GM12878 (cell line): ENCODE measurements at regions of chr18 and their contacts with region 1.

Region 1: DNA sequence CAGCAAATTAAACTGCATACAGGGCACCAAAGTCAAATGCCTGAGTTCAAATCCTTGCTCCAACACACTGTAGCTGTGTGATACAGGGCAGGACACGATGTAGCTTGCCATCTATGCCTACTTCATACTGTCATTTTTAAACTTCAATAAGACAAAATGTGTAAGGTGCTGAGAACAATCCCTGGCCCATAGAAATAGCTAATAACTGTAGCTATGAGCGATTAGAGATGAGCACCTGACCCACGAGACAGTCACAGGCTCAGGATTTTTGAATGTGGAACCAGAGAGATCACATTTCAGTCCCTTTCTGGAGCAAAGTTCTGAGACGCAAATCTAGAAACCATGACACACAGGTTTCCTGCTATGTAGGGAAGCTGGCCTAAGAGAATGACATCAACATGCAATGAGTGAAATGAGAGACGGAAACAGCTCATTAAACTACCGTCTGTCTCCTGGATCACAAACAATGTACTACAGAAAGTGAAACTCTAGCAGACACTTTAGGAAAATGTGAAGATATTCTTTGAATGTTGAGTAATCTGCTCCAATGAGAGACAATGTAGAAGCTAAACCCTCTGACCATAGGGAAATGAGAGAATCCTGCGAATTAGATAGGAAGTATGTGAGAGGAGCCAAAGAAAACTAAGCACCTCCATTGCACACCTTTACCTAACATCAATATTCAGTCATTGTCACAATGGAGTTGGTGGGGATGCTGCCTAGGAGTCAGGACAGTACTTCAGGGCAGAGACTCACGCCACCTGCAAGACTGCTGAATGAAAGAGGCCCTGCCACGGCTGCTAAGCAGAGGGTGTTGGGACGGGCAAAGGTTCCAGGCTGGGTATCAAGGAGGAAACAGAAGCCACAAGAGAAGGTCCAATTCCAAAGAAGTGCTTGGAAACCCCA is 25.5 kb downstream of the B4GALT6 start:
- DNase-seq: peak; percentile 89
- ATAC-seq: peak; percentile 81
- H3K4me3 ChIP-seq: peak overlapping the region; percentile 56
- H3K27ac ChIP-seq: peak overlapping the region; percentile 98
- H3K4me1 ChIP-seq: peaks cover 37% of the 10 kb centered on the region
- H3K27me3 ChIP-seq: no peaks in the 10 kb centered on the region
- CTCF ChIP-seq: no peak
- EP300 ChIP-seq: peak in 1 of 2 experiments; percentile 78; a peak in 2 of 4 replicates
- POLR2A ChIP-seq: no peak; the same call in 1 of the 2 replicates
- RAD21 ChIP-seq: no peak

Region 2: GRCh38 chr18:31497837-31498573 is 160.9 kb before region 1 on chr18 and contains the start of gene DSG2:
- CTCF ChIA-PET with region 1: no interaction called
- POLR2A ChIA-PET with region 1: interaction called, 3 read pairs
- RAD21 ChIA-PET with region 1: interaction called, 8 read pairs
- SMC1A ChIA-PET with region 1: interaction called, 7 read pairs
- in situ Hi-C with region 1: no loop called
- intact Hi-C with region 1: loop called (anchors 5 kb)
- DNase-seq: no peak
- ATAC-seq: peak; percentile 82
- H3K4me3 ChIP-seq: peak within 1 kb of the TSS; percentile 88
- H3K27ac ChIP-seq: peak within 1 kb of the TSS; percentile 79
- H3K4me1 ChIP-seq: peaks cover 6% of the 10 kb centered on the region
- H3K27me3 ChIP-seq: no peaks in the 10 kb centered on the region
- CTCF ChIP-seq: no peak
- EP300 ChIP-seq: no peak
- POLR2A ChIP-seq: peak; percentile 89
- RAD21 ChIP-seq: no peak
- polyA plus RNA-seq, gene DSG2: 11.7 to 12.7 TPM

Region 3: DNA sequence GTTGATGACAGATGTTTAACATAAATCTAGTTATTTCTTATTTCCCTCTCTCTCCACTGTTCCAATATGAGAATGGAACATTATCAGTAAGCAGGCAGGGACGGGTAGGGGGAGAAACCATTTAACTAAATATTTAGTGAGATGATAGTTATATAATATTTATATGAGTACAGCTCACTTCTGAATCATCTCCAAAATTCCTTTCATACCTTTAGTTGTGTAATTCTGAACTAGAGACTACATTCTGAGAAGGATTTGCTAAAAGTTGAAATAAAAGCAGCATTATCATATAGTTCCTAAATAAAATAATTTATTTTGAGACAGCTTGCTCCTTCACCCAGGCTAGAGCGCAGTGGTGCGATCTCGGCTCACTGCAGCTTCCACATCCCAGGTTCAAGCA is 15.9 kb before region 1 on chr18:
- CTCF ChIA-PET with region 1: interaction called, 38 read pairs
- POLR2A ChIA-PET with region 1: interaction called, 60 read pairs
- RAD21 ChIA-PET with region 1: interaction called, 102 read pairs
- SMC1A ChIA-PET with region 1: interaction called, 97 read pairs
- in situ Hi-C with region 1: no loop called
- intact Hi-C with region 1: no loop called
- DNase-seq: no peak
- ATAC-seq: no peak
- H3K4me3 ChIP-seq: no peak overlapping the region
- H3K27ac ChIP-seq: no peak overlapping the region
- H3K4me1 ChIP-seq: peaks cover 32% of the 10 kb centered on the region
- H3K27me3 ChIP-seq: no peaks in the 10 kb centered on the region
- CTCF ChIP-seq: no peak
- EP300 ChIP-seq: no peak
- POLR2A ChIP-seq: no peak
- RAD21 ChIP-seq: no peak

Region 4: DNA sequence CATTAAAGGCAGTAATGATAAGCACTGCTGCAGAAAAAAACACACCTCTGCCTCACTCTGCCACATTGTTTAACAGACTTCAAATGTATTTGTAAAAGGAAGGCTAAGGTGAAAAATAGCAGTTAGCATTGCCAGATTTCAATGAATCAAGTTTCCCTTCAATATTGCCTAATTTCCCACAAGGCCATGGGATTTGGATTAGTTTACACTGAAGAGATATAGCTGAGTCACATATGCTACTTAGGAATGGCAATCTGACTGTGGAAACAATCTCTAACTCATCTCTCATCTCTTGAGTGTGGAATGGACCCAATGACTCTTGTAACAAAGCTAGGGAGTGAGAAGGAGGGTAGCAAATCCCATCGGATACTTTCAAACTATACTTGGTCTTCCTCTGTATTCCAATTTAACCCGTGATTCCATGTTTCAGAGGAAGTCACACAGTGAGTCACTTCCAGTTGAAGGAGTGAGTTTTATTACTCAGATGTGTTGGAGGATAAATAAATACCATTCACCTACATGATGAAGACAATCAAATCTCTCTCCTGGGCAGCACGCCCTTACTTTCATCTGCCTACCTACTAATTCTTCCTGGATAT is 20.3 kb after region 1 on chr18:
- CTCF ChIA-PET with region 1: interaction called, 135 read pairs
- POLR2A ChIA-PET with region 1: interaction called, 64 read pairs
- RAD21 ChIA-PET with region 1: interaction called, 168 read pairs
- SMC1A ChIA-PET with region 1: interaction called, 169 read pairs
- in situ Hi-C with region 1: no loop called
- intact Hi-C with region 1: loop called (anchors 1 kb)
- DNase-seq: no peak
- ATAC-seq: no peak
- H3K4me3 ChIP-seq: peak overlapping the region; percentile 100
- H3K27ac ChIP-seq: peak overlapping the region; percentile 49; the same call in 1 of the 2 replicates
- H3K4me1 ChIP-seq: peaks cover 23% of the 10 kb centered on the region
- H3K27me3 ChIP-seq: no peaks in the 10 kb centered on the region
- CTCF ChIP-seq: no peak
- EP300 ChIP-seq: no peak
- POLR2A ChIP-seq: no peak
- RAD21 ChIP-seq: no peak

Region 5: DNA sequence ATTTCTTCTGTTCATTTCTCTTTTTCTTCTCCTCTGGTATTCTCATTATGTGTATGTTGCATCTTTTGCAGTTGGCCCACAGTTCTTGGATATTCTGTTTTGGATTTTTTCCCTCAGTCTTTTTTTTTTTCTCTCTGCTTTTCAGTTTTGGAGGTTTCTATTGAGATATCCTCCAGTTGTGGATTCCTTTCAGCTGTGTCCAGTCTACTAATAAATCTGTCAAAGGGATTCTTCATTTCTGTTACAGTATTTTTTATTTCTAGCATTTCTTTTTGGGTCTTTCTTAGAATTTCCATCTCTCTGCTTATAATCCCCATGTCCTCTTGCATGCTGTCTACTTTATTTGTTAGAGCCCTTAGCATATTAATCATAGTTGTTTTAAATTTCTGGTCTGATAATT is 524.6 kb after region 1 on chr18:
- CTCF ChIA-PET with region 1: no interaction called
- POLR2A ChIA-PET with region 1: no interaction called
- RAD21 ChIA-PET with region 1: no interaction called
- SMC1A ChIA-PET with region 1: no interaction called
- in situ Hi-C with region 1: no loop called
- intact Hi-C with region 1: no loop called
- DNase-seq: no peak
- ATAC-seq: no peak
- H3K4me3 ChIP-seq: no peak overlapping the region
- H3K27ac ChIP-seq: no peak overlapping the region
- H3K4me1 ChIP-seq: no peaks in the 10 kb centered on the region
- H3K27me3 ChIP-seq: no peaks in the 10 kb centered on the region
- CTCF ChIP-seq: no peak
- EP300 ChIP-seq: no peak
- POLR2A ChIP-seq: no peak
- RAD21 ChIP-seq: no peak